Sigmoid colon (tissue), 7 donors: ENCODE measurements at regions of chr6 and their contacts with region 1.

Region 1: DNA sequence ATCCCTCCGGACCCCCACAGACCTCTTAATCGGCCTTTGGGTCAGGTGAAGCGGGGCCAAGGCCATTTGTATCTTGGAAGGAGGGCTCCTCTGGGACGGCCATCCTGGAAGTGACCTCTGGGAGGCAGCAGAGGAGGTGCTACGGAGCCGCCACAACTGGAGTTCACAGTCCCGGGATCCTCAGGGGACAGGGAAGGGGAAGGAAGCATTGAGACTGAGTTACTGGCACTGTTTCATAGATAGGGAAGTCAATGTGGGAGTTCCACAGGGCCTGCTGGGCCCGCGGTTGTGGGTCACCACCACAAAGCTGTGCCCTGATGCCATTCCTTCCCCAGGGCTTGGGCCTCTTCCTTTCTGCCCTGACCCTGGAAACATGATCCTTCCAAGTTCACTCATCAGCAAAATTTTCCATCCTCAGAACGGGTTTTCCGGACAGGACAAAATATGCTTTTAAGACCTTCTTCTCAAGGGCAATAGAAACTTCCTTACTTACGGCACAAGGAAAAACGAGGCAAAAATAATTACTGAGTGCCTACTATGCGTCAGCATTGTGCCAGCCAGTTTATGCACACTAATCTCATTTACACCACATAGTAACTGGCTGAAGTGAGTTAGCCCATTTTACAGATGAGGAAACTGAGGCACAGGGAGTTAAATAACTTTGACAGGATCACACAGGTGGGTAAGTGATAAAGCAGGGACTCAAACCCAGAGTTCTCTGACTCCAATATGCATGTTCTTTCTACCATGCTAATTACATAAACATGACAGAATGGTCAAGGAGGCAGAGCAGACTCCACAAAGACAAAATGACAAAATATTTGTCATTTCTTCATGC is 143.8 kb downstream of the UNC5CL start:
- DNase-seq: peak; percentile 69
- H3K4me3 ChIP-seq: no peak overlapping the region
- H3K27ac ChIP-seq: no peak overlapping the region
- H3K4me1 ChIP-seq: peaks cover 0 to 5% (median under 1%) of the 10 kb centered on the region in 4 donors
- H3K27me3 ChIP-seq: no peaks in the 10 kb centered on the region
- CTCF ChIP-seq: peak; percentile 8 to 54 (median 47)
- EP300 ChIP-seq: no peak
- POLR2A ChIP-seq: no peak

Region 2: GRCh38 chr6:39688494-39688893 is 1206.7 kb before region 1 on chr6:
- intact Hi-C with region 1: no loop called
- DNase-seq: no peak
- H3K4me3 ChIP-seq: no peak overlapping the region
- H3K27ac ChIP-seq: no peak overlapping the region
- H3K4me1 ChIP-seq: no peaks in the 10 kb centered on the region
- H3K27me3 ChIP-seq: no peaks in the 10 kb centered on the region
- CTCF ChIP-seq: no peak
- EP300 ChIP-seq: no peak
- POLR2A ChIP-seq: no peak

Region 3: GRCh38 chr6:40460380-40460779 is 434.8 kb before region 1 on chr6:
- intact Hi-C with region 1: no loop called
- DNase-seq: no peak
- H3K4me3 ChIP-seq: no peak overlapping the region
- H3K27ac ChIP-seq: no peak overlapping the region
- H3K4me1 ChIP-seq: no peaks in the 10 kb centered on the region
- H3K27me3 ChIP-seq: no peaks in the 10 kb centered on the region
- CTCF ChIP-seq: no peak
- EP300 ChIP-seq: no peak
- POLR2A ChIP-seq: no peak

Region 4: DNA sequence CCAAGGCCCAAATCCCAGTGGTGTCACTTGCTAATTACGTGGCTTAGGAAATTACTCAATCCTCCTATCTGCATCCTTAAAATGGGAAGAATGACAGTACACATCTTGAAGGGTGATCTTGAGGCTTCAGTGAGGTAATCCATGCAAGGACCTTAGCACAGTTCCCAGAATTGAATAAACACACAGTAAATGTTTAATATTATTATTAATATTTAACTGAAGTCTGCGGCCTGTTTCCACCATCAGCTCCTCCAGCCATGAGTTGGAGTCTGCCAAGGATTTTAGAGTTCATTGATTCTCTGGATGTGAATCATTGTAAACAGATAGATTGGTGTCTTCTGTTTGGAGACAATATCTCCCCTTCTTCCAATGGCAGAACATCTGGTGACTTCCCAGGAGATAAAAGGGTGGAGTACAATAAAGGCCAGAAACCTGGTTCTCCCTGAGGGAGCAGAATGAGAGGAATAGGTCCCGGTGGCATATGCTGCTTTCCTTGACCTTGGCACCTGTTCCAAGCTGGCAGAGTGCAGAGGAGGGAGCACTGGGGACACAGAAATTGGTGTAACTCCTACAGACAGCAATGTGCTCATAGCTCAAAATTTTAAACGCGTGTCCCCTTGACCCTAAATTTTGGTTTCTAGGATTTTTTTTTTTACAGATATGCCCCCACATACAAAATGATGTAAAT is 118.4 kb after region 1 on chr6:
- intact Hi-C with region 1: no loop called
- DNase-seq: no peak
- H3K4me3 ChIP-seq: no peak overlapping the region
- H3K27ac ChIP-seq: no peak overlapping the region
- H3K4me1 ChIP-seq: no peaks in the 10 kb centered on the region
- H3K27me3 ChIP-seq: no peaks in the 10 kb centered on the region
- CTCF ChIP-seq: no peak
- EP300 ChIP-seq: no peak
- POLR2A ChIP-seq: no peak

Region 5: GRCh38 chr6:41027799-41028628 is 132.8 kb after region 1 on chr6:
- intact Hi-C with region 1: loop called (anchors 2 kb)
- DNase-seq: peak; percentile 89
- H3K4me3 ChIP-seq: peak overlapping the region; percentile 23 to 54 (median 46)
- H3K27ac ChIP-seq: peak overlapping the region; percentile 26 to 56 (median 38)
- H3K4me1 ChIP-seq: peaks cover 0 to 17% (median 10%) of the 10 kb centered on the region in 4 donors
- H3K27me3 ChIP-seq: no peaks in the 10 kb centered on the region
- CTCF ChIP-seq: peak; percentile 95 to 99 (median 98)
- EP300 ChIP-seq: no peak
- POLR2A ChIP-seq: no peak